H1 (cell line): ENCODE measurements at regions of chr7 and their contacts with region 1.

Region 1: GRCh38 chr7:108016841-108017775 is 14.1 kb upstream of the LAMB1 start:
- DNase-seq: no peak
- H3K4me3 ChIP-seq: no peak overlapping the region
- H3K27ac ChIP-seq: no peak overlapping the region
- H3K4me1 ChIP-seq: no peaks in the 10 kb centered on the region
- H3K27me3 ChIP-seq: no peaks in the 10 kb centered on the region
- CTCF ChIP-seq: peak in 2 of 3 experiments; percentile 8 to 62; a peak in 2 of 4 replicates
- EP300 ChIP-seq: no peak
- POLR2A ChIP-seq: no peak
- RAD21 ChIP-seq: peak; percentile 49 to 58

Region 2: DNA sequence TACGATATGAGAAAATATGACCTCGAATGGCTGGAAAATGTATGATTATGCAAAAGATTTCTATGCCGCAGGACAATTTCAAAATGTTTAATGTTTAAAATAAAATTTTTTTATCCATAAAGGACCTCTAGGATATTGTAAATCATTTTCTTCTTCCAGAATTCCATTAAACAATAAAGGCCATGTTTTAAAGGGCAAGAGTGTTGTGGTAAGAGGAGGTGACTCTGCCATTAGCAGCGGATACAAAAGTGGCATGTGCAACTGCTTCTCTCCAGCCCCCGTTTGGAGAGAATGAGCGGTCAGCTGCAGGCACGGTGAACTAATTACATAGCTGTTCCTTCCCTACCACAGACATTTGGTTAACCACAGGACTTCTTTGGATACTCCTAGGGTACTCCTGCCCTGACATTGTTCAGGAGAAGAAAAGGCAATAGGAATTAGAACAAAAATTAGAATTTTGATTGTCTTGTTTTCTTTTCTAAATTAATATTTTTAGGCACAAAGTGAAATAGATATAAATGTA is 784.5 kb before region 1 on chr7:
- CTCF ChIA-PET with region 1: no interaction called
- POLR2A ChIA-PET with region 1: no interaction called
- DNase-seq: no peak
- H3K4me3 ChIP-seq: no peak overlapping the region
- H3K27ac ChIP-seq: no peak overlapping the region
- H3K4me1 ChIP-seq: peaks cover 0 to 9% (median 2%) of the 10 kb centered on the region in 4 experiments; a peak in 3 of 7 replicates
- H3K27me3 ChIP-seq: no peaks in the 10 kb centered on the region
- CTCF ChIP-seq: no peak
- EP300 ChIP-seq: no peak
- POLR2A ChIP-seq: no peak
- RAD21 ChIP-seq: no peak

Region 3: GRCh38 chr7:107917763-107918651 is 99.1 kb before region 1 on chr7:
- CTCF ChIA-PET with region 1: interaction called, 10 read pairs
- POLR2A ChIA-PET with region 1: no interaction called
- DNase-seq: no peak
- H3K4me3 ChIP-seq: no peak overlapping the region
- H3K27ac ChIP-seq: no peak overlapping the region
- H3K4me1 ChIP-seq: no peaks in the 10 kb centered on the region
- H3K27me3 ChIP-seq: no peaks in the 10 kb centered on the region
- CTCF ChIP-seq: no peak
- EP300 ChIP-seq: no peak
- POLR2A ChIP-seq: no peak
- RAD21 ChIP-seq: no peak

Region 4: GRCh38 chr7:108002726-108003598 is 14.1 kb before region 1 on chr7 and contains the start of gene LAMB1:
- CTCF ChIA-PET with region 1: interaction called, 27 read pairs
- POLR2A ChIA-PET with region 1: interaction called, 5 read pairs
- DNase-seq: peak in 1 of 2 experiments; percentile 87
- H3K4me3 ChIP-seq: peak within 1 kb of the TSS; percentile 40 to 92 (median 69)
- H3K27ac ChIP-seq: no peak within 1 kb of the TSS
- H3K4me1 ChIP-seq: peaks cover 7 to 21% (median 11%) of the 10 kb centered on the region in 4 experiments
- H3K27me3 ChIP-seq: peaks cover 34 to 75% (median 65%) of the 10 kb centered on the region in 4 experiments
- CTCF ChIP-seq: no peak
- EP300 ChIP-seq: no peak
- POLR2A ChIP-seq: no peak
- RAD21 ChIP-seq: no peak
- total RNA-seq, gene LAMB1: 37.2 and 38.5 TPM in 2 replicates

Region 5: GRCh38 chr7:108034586-108034985 is 17.5 kb after region 1 on chr7:
- CTCF ChIA-PET with region 1: interaction called, 86 read pairs
- POLR2A ChIA-PET with region 1: interaction called, 3 read pairs
- DNase-seq: no peak
- H3K4me3 ChIP-seq: peak overlapping the region in 1 of 4 experiments; percentile 2; a peak in 2 of 8 replicates
- H3K27ac ChIP-seq: no peak overlapping the region
- H3K4me1 ChIP-seq: peaks cover 0 to 6% (median 2%) of the 10 kb centered on the region in 4 experiments; a peak in 3 of 7 replicates
- H3K27me3 ChIP-seq: no peaks in the 10 kb centered on the region
- CTCF ChIP-seq: no peak
- EP300 ChIP-seq: peak in 1 of 2 experiments; percentile 59; a peak in 1 of 3 replicates
- POLR2A ChIP-seq: no peak
- RAD21 ChIP-seq: no peak

Region 6: DNA sequence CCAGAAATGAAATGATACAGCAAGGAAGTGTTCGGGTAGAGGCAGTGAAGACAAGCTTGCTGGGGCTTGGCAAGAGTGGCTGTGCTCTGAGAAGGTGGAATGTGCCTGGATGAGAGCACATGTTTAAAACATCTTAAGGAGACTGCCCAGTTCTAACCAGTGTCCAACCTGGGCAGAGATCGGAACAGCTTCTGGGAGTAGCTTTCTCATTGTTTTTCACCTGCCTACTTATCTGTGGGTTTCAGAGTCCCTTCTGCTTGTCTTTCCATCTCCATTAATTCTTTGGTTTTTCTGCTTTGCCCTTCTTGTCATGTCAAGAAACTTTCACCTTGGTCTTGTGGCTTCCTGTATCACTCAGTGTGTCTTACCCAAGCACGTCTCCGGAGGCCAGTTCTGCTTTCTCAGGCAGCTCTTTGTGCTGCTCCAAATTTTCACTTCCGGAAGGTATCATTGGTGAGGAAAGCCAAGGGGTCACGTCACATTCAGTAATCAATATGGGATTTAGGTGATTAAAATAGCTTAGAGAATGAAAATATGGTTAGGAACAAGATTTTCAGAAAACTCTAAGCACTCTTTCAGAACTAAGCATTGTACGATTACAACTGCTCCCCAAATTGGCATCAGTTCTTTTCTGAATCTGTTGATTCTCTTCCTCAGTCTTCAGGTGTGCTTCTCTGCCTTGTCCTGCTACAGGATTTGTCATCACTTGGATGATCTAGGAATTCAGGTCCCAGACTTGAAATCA is 118.5 kb after region 1 on chr7:
- CTCF ChIA-PET with region 1: no interaction called
- POLR2A ChIA-PET with region 1: no interaction called
- DNase-seq: no peak
- H3K4me3 ChIP-seq: no peak overlapping the region
- H3K27ac ChIP-seq: no peak overlapping the region
- H3K4me1 ChIP-seq: peaks cover 0 to 6% (median 1%) of the 10 kb centered on the region in 4 experiments; a peak in 1 of 7 replicates
- H3K27me3 ChIP-seq: no peaks in the 10 kb centered on the region
- CTCF ChIP-seq: no peak
- EP300 ChIP-seq: no peak
- POLR2A ChIP-seq: no peak
- RAD21 ChIP-seq: no peak